GM12878 (cell line): ENCODE measurements at regions of chr4 and their contacts with region 1.

Region 1: GRCh38 chr4:22473268-22473667 is 42.6 kb downstream of the ADGRA3 start:
- DNase-seq: no peak
- ATAC-seq: 0 out of 3 replicates have a peak, but pooled peaks have one; percentile 16
- H3K4me3 ChIP-seq: no peak overlapping the region
- H3K27ac ChIP-seq: no peak overlapping the region
- H3K4me1 ChIP-seq: no peaks in the 10 kb centered on the region
- H3K27me3 ChIP-seq: no peaks in the 10 kb centered on the region
- CTCF ChIP-seq: no peak
- EP300 ChIP-seq: no peak
- POLR2A ChIP-seq: no peak
- RAD21 ChIP-seq: no peak

Region 2: GRCh38 chr4:22434895-22435294 is 38.4 kb before region 1 on chr4:
- CTCF ChIA-PET with region 1: interaction called, 3 read pairs
- POLR2A ChIA-PET with region 1: no interaction called
- RAD21 ChIA-PET with region 1: interaction called, 3 read pairs
- SMC1A ChIA-PET with region 1: interaction called, 11 read pairs
- in situ Hi-C with region 1: no loop called
- intact Hi-C with region 1: no loop called
- DNase-seq: no peak
- ATAC-seq: peak; percentile 91
- H3K4me3 ChIP-seq: no peak overlapping the region
- H3K27ac ChIP-seq: no peak overlapping the region
- H3K4me1 ChIP-seq: no peaks in the 10 kb centered on the region
- H3K27me3 ChIP-seq: no peaks in the 10 kb centered on the region
- CTCF ChIP-seq: peak; percentile 14 to 56 (median 44); a peak in 3 of 6 replicates
- EP300 ChIP-seq: no peak
- POLR2A ChIP-seq: no peak
- RAD21 ChIP-seq: peak; percentile 13; the same call in 1 of the 2 replicates

Region 3: DNA sequence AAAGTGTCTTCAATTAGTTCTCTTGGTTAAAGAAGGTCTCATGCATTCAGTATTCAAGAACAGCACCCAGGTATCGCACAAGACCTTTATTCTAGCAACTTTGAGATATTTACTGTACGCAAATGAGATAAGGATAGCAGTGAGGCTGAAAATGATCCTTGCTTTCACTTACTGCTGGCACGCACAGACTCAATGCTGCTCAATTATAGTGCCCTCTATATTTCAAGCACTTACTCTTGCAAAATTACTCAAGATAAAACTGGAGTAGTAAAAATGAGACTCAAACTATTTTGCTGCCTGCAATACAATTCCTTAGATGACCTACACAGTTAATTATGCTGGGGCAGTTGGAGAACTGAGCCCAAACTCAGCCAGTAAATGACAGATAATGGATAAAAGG is 18.3 kb before region 1 on chr4:
- CTCF ChIA-PET with region 1: interaction called, 12 read pairs
- POLR2A ChIA-PET with region 1: interaction called, 4 read pairs
- RAD21 ChIA-PET with region 1: interaction called, 13 read pairs
- SMC1A ChIA-PET with region 1: interaction called, 13 read pairs
- in situ Hi-C with region 1: no loop called
- intact Hi-C with region 1: no loop called
- DNase-seq: no peak
- ATAC-seq: peak; percentile 85
- H3K4me3 ChIP-seq: no peak overlapping the region
- H3K27ac ChIP-seq: no peak overlapping the region
- H3K4me1 ChIP-seq: no peaks in the 10 kb centered on the region
- H3K27me3 ChIP-seq: no peaks in the 10 kb centered on the region
- CTCF ChIP-seq: no peak
- EP300 ChIP-seq: no peak; a peak in 1 of 4 replicates
- POLR2A ChIP-seq: no peak
- RAD21 ChIP-seq: no peak

Region 4: GRCh38 chr4:22483551-22483981 is 10.3 kb after region 1 on chr4:
- CTCF ChIA-PET with region 1: interaction called, 4 read pairs
- POLR2A ChIA-PET with region 1: interaction called, 19 read pairs
- RAD21 ChIA-PET with region 1: interaction called, 72 read pairs
- SMC1A ChIA-PET with region 1: interaction called, 126 read pairs
- in situ Hi-C with region 1: no loop called
- intact Hi-C with region 1: no loop called
- DNase-seq: peak; percentile 38
- ATAC-seq: peak; percentile 48
- H3K4me3 ChIP-seq: no peak overlapping the region
- H3K27ac ChIP-seq: no peak overlapping the region
- H3K4me1 ChIP-seq: no peaks in the 10 kb centered on the region
- H3K27me3 ChIP-seq: no peaks in the 10 kb centered on the region
- CTCF ChIP-seq: no peak
- EP300 ChIP-seq: peak; percentile 62 to 78
- POLR2A ChIP-seq: no peak
- RAD21 ChIP-seq: no peak

Region 5: GRCh38 chr4:22508379-22508778 is 35.1 kb after region 1 on chr4:
- CTCF ChIA-PET with region 1: interaction called, 6 read pairs
- POLR2A ChIA-PET with region 1: interaction called, 14 read pairs
- RAD21 ChIA-PET with region 1: interaction called, 14 read pairs
- SMC1A ChIA-PET with region 1: interaction called, 22 read pairs
- in situ Hi-C with region 1: no loop called
- intact Hi-C with region 1: no loop called
- DNase-seq: no peak
- ATAC-seq: no peak
- H3K4me3 ChIP-seq: no peak overlapping the region
- H3K27ac ChIP-seq: no peak overlapping the region
- H3K4me1 ChIP-seq: no peaks in the 10 kb centered on the region
- H3K27me3 ChIP-seq: no peaks in the 10 kb centered on the region
- CTCF ChIP-seq: no peak
- EP300 ChIP-seq: no peak
- POLR2A ChIP-seq: no peak
- RAD21 ChIP-seq: no peak